Right ventricle myocardium inferior (tissue), 1 donor: ENCODE measurements at regions of chr9 and their contacts with region 1.

Region 1: GRCh38 chr9:113558632-113559502 is 95.3 kb downstream of the RGS3 start:
- DNase-seq: peak; percentile 90
- ATAC-seq: peak; percentile 97

Region 2: DNA sequence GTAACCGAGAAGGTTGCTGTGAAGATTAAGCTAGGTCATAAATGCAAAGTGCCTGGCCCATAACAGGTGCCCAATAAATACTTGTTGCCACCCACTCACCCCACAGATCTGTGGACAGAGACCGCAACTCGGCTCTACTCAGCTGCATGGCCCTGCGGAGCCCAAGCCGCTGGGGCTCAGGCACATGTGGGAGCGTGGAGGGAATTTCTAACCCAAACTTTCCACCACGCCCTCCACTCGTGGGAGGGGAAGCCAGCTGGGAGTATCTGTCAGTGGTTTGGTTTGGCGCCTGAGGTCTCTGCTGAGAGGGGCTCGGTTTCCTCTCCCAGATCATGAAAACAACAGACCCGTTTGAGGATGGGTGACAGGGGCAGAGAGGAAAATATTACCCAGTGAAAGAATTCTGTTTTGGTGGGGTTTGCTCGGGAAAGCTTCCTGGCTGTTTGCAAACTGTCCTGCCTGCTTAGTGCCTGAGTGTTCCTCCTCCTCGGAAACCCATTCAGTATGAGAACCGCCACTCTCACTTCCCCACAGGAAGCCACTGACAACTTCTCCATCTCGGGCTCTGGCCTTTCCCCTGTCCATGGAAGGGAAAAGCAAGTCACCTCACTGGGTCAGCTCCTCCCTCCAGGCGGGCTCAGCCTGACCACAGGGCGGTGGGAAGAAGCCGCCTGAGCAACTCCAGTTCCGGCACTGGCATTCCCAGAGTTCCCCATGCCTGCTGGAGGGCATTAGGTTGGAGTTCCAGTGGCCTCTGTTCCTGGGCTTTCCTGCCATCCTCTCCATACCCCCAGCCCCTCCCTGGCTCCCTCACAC is 35.2 kb before region 1 on chr9:
- intact Hi-C with region 1: loop called (anchors 5 kb)
- DNase-seq: peak; percentile 77
- ATAC-seq: peak; percentile 63

Region 3: DNA sequence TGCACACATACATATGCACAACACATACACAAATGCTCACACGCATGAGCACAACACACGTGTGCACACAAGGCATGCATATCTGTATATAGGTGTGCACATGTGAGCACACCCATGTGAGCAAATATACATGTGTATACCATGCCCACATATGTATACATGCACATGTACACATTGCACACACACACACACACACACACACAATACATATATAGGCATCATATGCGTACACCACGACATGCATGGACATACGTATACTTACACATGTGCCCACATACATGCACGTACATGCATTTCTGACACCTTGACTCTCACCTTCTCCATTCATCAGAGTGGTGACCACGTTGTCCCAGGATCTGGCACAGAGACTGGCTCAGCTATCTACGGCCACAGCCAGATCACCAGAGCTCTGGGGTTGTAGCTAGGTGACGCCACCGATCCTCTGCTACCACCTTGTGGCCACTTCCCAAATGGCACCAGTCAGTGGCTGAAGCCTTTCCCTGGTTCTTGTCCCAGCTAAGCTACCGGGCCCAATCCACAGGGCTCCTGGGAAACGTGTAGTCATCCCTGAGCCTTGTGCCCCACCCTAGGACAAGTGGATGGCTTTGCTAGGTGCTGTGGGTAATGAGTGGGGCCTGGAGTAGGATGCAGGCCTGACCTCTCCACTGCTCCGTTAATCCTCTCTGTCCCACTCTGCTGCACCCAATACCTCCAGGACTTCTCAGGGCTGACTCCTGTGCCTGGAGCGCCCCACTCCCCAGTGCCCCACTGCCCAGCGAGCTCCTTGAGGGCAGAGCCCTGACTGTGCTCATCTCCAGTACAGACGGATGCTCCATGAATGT is 99.1 kb after region 1 on chr9:
- intact Hi-C with region 1: no loop called
- DNase-seq: peak; percentile 84
- ATAC-seq: peak; percentile 72